Activated CD8-positive, alpha-beta T cell treated with anti-CD3 and anti-CD28 coated beads for 36 hours (primary cell): ENCODE measurements at regions of chr11 and their contacts with region 1.

Region 1: GRCh38 chr11:72722050-72722748 is 30.0 kb downstream of the ARAP1 start:
- DNase-seq: peak; percentile 91
- ATAC-seq: peak; percentile 90
- H3K4me3 Mint-ChIP-seq: peak overlapping the region; percentile 92
- H3K27ac Mint-ChIP-seq: peak overlapping the region; percentile 95
- H3K4me1 Mint-ChIP-seq: peaks cover 44% of the 10 kb centered on the region
- H3K27me3 Mint-ChIP-seq: no peaks in the 10 kb centered on the region
- CTCF ChIP-seq: no peak

Region 2: GRCh38 chr11:72338741-72339140 is 383.5 kb before region 1 on chr11:
- CTCF ChIA-PET with region 1: no interaction called
- POLR2A ChIA-PET with region 1: no interaction called
- intact Hi-C with region 1: no loop called
- DNase-seq: no peak
- ATAC-seq: no peak
- H3K4me3 Mint-ChIP-seq: no peak overlapping the region
- H3K27ac Mint-ChIP-seq: no peak overlapping the region
- H3K4me1 Mint-ChIP-seq: peaks cover 21% of the 10 kb centered on the region
- H3K27me3 Mint-ChIP-seq: no peaks in the 10 kb centered on the region
- CTCF ChIP-seq: no peak

Region 3: DNA sequence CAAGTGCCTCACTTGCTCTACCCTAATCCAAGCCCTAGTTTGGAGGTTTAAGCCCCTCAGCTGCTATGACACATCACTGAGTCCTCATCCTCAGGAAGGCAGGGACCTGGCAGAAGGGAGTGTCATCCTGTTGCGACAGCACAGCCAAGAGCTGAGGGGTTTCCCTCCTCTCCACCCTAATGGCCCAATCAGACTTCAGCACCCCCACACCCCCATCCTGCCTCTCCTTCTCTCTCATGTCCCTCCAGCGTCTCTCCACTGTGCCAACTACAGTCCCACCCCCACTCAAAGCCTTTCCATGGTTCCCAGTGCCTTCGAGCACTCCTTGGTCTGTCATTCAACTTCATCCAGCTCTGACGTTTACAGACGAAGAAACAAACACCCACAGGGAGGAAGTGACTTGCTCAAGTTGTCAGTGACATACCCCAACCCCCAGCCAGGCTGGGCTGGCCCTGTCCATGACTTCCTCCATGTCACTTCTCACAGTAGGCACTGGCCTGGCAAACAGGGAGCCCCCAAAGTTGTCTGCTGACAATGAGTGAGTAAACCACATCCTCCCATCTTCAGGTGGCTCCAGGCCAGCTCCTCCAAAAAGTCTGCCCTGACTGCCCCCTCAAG is 14.4 kb after region 1 on chr11:
- CTCF ChIA-PET with region 1: interaction called, 34 read pairs
- POLR2A ChIA-PET with region 1: interaction called, 5 read pairs
- intact Hi-C with region 1: no loop called
- DNase-seq: peak; percentile 90
- ATAC-seq: peak; percentile 90
- H3K4me3 Mint-ChIP-seq: peak overlapping the region; percentile 50
- H3K27ac Mint-ChIP-seq: peak overlapping the region; percentile 98
- H3K4me1 Mint-ChIP-seq: peaks cover 55% of the 10 kb centered on the region
- H3K27me3 Mint-ChIP-seq: no peaks in the 10 kb centered on the region
- CTCF ChIP-seq: no peak

Region 4: DNA sequence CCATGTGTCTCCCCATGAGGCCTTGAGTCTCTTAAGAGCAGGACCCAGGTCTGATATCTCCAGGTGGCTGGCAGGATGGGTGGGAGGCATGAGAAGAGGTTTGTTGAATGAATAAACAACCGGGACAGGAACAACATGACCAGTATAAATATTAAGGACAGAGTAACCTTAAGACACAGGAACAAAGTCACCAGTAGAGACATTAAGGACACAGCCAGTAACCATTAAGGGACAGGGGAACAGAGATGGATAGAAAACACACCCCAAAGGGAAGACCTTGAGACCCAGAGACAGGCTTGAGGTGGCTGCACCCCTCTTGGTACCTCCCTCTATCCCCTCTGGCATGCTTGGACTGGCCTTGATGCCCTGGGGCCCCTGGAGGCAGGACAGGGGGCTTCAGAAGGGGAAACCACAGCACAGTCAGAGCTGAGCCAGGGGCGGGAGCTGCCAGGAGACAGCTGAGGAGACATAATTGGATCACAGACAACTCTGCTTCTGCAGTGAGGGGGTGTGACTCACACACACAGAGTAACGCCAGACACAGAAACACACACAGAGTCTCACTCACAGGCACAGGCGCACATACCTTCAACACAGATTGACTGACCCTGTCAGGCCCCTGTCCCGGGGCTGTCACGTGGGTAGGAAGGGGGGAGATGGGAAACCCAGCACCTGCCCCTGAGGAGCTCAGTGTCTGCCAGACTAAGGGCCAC is 50.9 kb after region 1 on chr11:
- CTCF ChIA-PET with region 1: interaction called, 14 read pairs
- POLR2A ChIA-PET with region 1: no interaction called
- intact Hi-C with region 1: no loop called
- DNase-seq: no peak
- ATAC-seq: peak; percentile 42
- H3K4me3 Mint-ChIP-seq: no peak overlapping the region
- H3K27ac Mint-ChIP-seq: no peak overlapping the region
- H3K4me1 Mint-ChIP-seq: no peaks in the 10 kb centered on the region
- H3K27me3 Mint-ChIP-seq: no peaks in the 10 kb centered on the region
- CTCF ChIP-seq: no peak

Region 5: GRCh38 chr11:72793425-72794367 is 71.5 kb after region 1 on chr11 and contains the start of gene STARD10:
- CTCF ChIA-PET with region 1: interaction called, 99 read pairs
- POLR2A ChIA-PET with region 1: interaction called, 6 read pairs
- intact Hi-C with region 1: loop called (anchors 1 kb)
- DNase-seq: peak; percentile 98
- ATAC-seq: peak; percentile 95
- H3K4me3 Mint-ChIP-seq: peak within 1 kb of the TSS; percentile 97
- H3K27ac Mint-ChIP-seq: peak within 1 kb of the TSS; percentile 100
- H3K4me1 Mint-ChIP-seq: peaks cover 19% of the 10 kb centered on the region
- H3K27me3 Mint-ChIP-seq: no peaks in the 10 kb centered on the region
- CTCF ChIP-seq: peak; percentile 95
- total RNA-seq, gene STARD10: 8.1 to 8.6 TPM

Region 6: DNA sequence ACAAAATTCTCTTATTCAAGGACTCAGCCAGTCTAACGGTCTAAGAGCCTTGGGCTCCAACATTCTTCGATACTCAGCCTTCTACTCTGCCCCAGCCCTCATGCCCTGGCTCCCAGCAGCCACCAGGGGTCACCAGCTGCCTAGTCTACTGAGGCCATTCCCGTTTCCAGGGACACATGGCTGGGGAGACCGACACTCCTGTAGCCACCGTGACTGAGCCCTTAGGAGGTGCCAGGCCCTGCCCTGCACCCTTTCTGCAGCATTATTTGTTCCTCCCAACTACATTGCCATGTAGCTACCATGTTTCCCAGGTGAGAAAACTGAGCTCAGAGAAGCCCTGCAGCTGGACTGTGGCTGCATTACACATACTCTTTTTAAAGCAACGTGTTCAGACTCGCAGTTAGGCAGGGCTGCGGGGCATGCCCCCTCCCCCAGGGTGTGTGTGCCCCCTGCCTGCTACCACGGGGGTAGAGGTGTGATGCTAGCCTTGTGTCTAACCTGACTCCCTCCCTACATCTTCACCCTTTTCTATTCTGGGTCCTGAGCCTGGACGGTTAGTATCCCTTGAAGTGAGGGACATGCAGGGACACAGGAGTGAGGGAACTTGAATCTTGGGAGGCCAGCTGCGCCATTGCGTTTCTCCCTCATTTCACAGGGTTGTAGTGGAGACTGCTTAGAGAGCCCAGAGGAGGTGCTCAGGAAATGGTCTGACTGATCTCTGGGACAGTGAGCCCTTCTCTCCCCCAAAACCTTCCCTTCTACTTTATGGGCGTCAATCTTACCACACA is 109.5 kb after region 1 on chr11:
- CTCF ChIA-PET with region 1: interaction called, 11 read pairs
- POLR2A ChIA-PET with region 1: interaction called, 9 read pairs
- intact Hi-C with region 1: no loop called
- DNase-seq: peak; percentile 48
- ATAC-seq: peak; percentile 60
- H3K4me3 Mint-ChIP-seq: no peak overlapping the region
- H3K27ac Mint-ChIP-seq: peak overlapping the region; percentile 33
- H3K4me1 Mint-ChIP-seq: peaks cover 14% of the 10 kb centered on the region
- H3K27me3 Mint-ChIP-seq: no peaks in the 10 kb centered on the region
- CTCF ChIP-seq: peak; percentile 55

Region 7: DNA sequence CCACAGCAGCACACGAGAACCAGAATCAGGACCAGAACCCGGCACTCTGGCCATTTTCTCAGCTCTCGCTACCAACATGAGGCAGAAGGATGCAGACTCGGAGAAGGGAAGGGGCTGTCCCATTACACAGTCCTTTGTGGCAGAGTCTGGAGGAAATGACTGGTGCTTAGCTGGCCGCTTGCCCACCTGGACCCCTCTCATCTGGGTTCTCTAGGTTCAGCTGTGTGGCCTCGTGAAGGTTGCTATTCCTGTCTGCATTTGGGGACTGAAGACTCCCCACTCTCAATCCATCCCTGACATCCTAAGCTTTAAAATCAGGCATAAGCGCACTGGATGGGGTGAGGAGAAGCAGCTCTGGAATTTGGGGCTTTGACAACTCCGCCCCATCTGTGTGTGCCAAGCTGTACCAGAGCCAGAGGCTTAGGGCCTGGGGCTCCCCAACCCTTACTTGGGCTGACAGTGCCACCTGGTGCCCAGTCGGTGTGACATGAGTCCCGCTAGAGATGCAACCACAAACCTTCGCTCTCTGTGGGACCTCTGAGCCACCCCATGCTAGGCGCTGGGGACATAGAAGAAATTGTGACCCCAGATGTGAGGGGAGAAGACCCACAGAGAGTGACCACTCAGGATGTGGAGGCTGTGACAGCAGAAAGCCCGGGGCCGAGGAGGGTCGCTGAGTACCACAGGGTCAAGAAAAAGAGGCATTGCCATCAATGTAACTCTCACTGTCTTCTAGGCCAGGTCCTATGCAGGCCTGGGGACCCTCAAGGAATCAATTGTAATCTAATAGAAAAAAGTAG is 455.8 kb after region 1 on chr11:
- CTCF ChIA-PET with region 1: interaction called, 21 read pairs
- POLR2A ChIA-PET with region 1: no interaction called
- intact Hi-C with region 1: no loop called
- DNase-seq: peak; percentile 85
- ATAC-seq: peak; percentile 99
- H3K4me3 Mint-ChIP-seq: no peak overlapping the region
- H3K27ac Mint-ChIP-seq: no peak overlapping the region
- H3K4me1 Mint-ChIP-seq: no peaks in the 10 kb centered on the region
- H3K27me3 Mint-ChIP-seq: no peaks in the 10 kb centered on the region
- CTCF ChIP-seq: peak; percentile 78